ENCODE measurements at regions of chr3 and their contacts with region 1.

Region 1: GRCh38 chr3:194058189-194058571 is 77.8 kb upstream of the HES1 start:
- DNase-seq: peak; percentile 83 to 87
- H3K4me3 ChIP-seq: peak overlapping the region; percentile 28
- H3K4me3 Mint-ChIP-seq: peak overlapping the region; percentile 75
- H3K27ac Mint-ChIP-seq: peak overlapping the region; percentile 47
- H3K4me1 ChIP-seq: peaks cover 54% of the 10 kb centered on the region
- H3K4me1 Mint-ChIP-seq: peaks cover 36% of the 10 kb centered on the region
- H3K27me3 ChIP-seq: no peaks in the 10 kb centered on the region
- H3K27me3 Mint-ChIP-seq: no peaks in the 10 kb centered on the region
- CTCF ChIP-seq: no peak

Region 2: GRCh38 chr3:193851941-193852674 is 206.1 kb before region 1 on chr3:
- CTCF ChIA-PET with region 1: no interaction called
- POLR2A ChIA-PET with region 1: no interaction called
- intact Hi-C with region 1: loop called (anchors 2 kb)
- DNase-seq: no peak
- H3K4me3 ChIP-seq: no peak overlapping the region
- H3K4me3 Mint-ChIP-seq: peak overlapping the region; percentile 20
- H3K27ac Mint-ChIP-seq: peak overlapping the region; percentile 84
- H3K4me1 ChIP-seq: peaks cover 56% of the 10 kb centered on the region
- H3K4me1 Mint-ChIP-seq: peaks cover 40% of the 10 kb centered on the region
- H3K27me3 ChIP-seq: no peaks in the 10 kb centered on the region
- H3K27me3 Mint-ChIP-seq: no peaks in the 10 kb centered on the region
- CTCF ChIP-seq: no peak

Region 3: GRCh38 chr3:193971261-193971751 is 86.9 kb before region 1 on chr3:
- CTCF ChIA-PET with region 1: no interaction called
- POLR2A ChIA-PET with region 1: no interaction called
- intact Hi-C with region 1: loop called (anchors 2 kb)
- DNase-seq: no peak
- H3K4me3 ChIP-seq: no peak overlapping the region
- H3K4me3 Mint-ChIP-seq: no peak overlapping the region
- H3K27ac Mint-ChIP-seq: no peak overlapping the region
- H3K4me1 ChIP-seq: peaks cover 28% of the 10 kb centered on the region
- H3K4me1 Mint-ChIP-seq: peaks cover 33% of the 10 kb centered on the region
- H3K27me3 ChIP-seq: no peaks in the 10 kb centered on the region
- H3K27me3 Mint-ChIP-seq: no peaks in the 10 kb centered on the region
- CTCF ChIP-seq: no peak

Region 4: GRCh38 chr3:194009892-194010533 is 48.2 kb before region 1 on chr3:
- CTCF ChIA-PET with region 1: no interaction called
- POLR2A ChIA-PET with region 1: no interaction called
- intact Hi-C with region 1: no loop called
- DNase-seq: no peak
- H3K4me3 ChIP-seq: no peak overlapping the region
- H3K4me3 Mint-ChIP-seq: no peak overlapping the region
- H3K27ac Mint-ChIP-seq: peak overlapping the region; percentile 37
- H3K4me1 ChIP-seq: peaks cover 12% of the 10 kb centered on the region
- H3K4me1 Mint-ChIP-seq: peaks cover 21% of the 10 kb centered on the region
- H3K27me3 ChIP-seq: no peaks in the 10 kb centered on the region
- H3K27me3 Mint-ChIP-seq: no peaks in the 10 kb centered on the region
- CTCF ChIP-seq: no peak

Region 5: GRCh38 chr3:194032828-194033435 is 25.2 kb before region 1 on chr3:
- CTCF ChIA-PET with region 1: no interaction called
- POLR2A ChIA-PET with region 1: no interaction called
- intact Hi-C with region 1: no loop called
- DNase-seq: no peak
- H3K4me3 ChIP-seq: no peak overlapping the region
- H3K4me3 Mint-ChIP-seq: no peak overlapping the region
- H3K27ac Mint-ChIP-seq: no peak overlapping the region
- H3K4me1 ChIP-seq: peaks cover 26% of the 10 kb centered on the region
- H3K4me1 Mint-ChIP-seq: peaks cover 34% of the 10 kb centered on the region
- H3K27me3 ChIP-seq: no peaks in the 10 kb centered on the region
- H3K27me3 Mint-ChIP-seq: no peaks in the 10 kb centered on the region
- CTCF ChIP-seq: no peak

Region 6: DNA sequence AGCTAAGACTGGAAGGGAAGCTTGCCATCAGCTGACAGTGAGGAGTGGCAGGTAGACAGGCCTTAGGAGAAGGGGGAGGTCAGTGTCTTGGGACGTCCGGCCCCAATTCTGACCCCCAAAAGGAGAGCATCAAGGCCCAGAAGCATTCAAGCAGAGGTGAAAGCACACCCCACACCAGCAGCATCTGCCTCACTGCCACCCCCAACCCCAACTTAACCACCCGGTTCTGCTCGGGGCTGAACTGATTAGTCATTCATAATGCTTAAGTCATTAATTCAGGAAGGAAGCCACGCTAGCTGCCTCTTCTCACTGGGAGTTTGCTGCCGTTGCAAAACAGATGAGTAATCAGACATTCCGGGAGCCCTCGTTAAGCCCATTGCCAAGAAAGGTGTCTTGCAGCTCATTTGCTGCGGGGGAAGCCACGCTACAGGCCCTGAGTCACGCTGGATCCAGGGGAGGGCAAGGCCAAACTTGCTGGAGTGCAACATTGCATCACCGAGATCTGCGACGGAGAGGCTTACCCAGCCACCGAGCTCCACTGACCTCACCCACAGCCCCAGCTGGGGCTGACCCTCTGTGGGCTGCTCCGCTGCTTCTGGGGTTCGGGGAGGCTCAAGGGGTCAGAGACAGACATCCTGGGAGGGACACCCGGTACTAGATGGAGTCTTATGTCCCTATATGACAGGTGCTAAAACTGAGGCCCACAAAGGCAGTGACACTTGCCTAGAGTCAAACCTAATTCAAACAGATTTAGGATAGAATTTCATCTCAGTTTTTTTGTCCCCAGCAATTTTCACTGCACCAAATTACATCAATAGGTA is 31.4 kb after region 1 on chr3:
- CTCF ChIA-PET with region 1: no interaction called
- POLR2A ChIA-PET with region 1: no interaction called
- intact Hi-C with region 1: no loop called
- DNase-seq: peak; percentile 32 to 63
- H3K4me3 ChIP-seq: no peak overlapping the region
- H3K4me3 Mint-ChIP-seq: no peak overlapping the region
- H3K27ac Mint-ChIP-seq: no peak overlapping the region
- H3K4me1 ChIP-seq: peaks cover 31% of the 10 kb centered on the region
- H3K4me1 Mint-ChIP-seq: peaks cover 35% of the 10 kb centered on the region
- H3K27me3 ChIP-seq: no peaks in the 10 kb centered on the region
- H3K27me3 Mint-ChIP-seq: no peaks in the 10 kb centered on the region
- CTCF ChIP-seq: no peak

Region 7: DNA sequence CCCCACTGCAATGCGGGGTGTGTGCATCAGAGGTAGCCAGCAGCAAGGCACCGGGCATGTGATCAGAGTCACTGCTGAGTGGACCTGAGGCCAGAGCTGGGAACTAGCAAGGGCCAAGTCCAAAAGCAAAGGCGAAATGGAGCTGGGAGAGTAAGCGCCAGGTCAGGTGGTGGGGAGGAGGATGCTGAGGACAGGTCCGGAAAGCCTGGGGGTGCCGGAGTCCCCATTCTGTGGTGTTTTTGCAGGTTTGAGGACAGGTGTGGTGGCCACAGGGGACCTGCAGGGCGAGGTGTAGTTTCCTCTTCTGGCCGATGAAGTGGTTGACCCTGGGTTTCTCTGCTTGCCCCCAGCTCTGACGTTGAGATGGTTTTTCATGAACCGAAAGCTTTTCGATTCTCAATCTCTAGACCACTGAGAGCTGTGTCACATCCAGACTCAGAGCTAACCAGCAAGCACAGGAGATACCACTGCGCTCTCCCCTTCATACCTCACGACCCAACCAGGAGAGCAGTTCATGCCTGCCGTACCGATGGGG is 42.7 kb after region 1 on chr3:
- CTCF ChIA-PET with region 1: interaction called, 6 read pairs
- POLR2A ChIA-PET with region 1: no interaction called
- intact Hi-C with region 1: loop called (anchors 1 kb)
- DNase-seq: no peak
- H3K4me3 ChIP-seq: no peak overlapping the region
- H3K4me3 Mint-ChIP-seq: peak overlapping the region; percentile 43
- H3K27ac Mint-ChIP-seq: peak overlapping the region; percentile 46
- H3K4me1 ChIP-seq: peaks cover 70% of the 10 kb centered on the region
- H3K4me1 Mint-ChIP-seq: peaks cover 67% of the 10 kb centered on the region
- H3K27me3 ChIP-seq: no peaks in the 10 kb centered on the region
- H3K27me3 Mint-ChIP-seq: no peaks in the 10 kb centered on the region
- CTCF ChIP-seq: no peak

Region 8: DNA sequence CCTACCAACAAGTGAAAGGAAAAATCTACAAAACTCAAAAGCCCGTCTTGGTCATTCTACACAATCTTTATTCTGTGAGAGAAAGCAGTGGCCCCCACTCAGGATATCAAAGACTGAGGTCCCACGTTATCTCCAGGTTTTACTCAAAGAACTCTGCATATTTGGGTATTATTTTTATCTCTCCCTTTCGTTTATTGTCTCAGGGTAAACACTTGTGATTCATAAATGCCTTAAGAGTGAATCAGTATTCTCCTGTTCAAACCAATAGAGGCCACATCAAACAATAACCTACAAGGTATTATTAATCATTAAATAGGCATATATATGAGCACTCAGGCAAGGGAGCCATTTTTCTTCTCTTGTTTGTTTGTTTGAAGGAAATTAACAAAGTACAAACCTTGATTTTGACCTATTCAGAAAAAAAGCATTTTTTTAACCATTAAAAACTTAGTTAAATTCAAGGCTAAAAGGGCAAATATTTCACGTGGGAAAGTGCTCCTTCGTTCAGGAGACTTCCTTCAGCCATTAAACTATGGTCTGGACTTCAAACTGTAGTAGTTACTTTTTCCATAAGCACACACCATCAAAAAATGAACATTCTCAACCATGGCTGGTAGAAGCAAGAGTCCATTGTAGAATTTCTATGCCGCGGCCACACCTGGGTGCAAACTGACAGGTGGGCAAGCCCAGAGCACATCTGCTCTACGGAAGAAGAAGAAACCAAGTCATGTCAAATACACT is 63.9 kb after region 1 on chr3:
- CTCF ChIA-PET with region 1: interaction called, 3 read pairs
- POLR2A ChIA-PET with region 1: no interaction called
- intact Hi-C with region 1: loop called (anchors 2 kb)
- DNase-seq: peak; percentile 70 to 72
- H3K4me3 ChIP-seq: no peak overlapping the region
- H3K4me3 Mint-ChIP-seq: peak overlapping the region; percentile 56
- H3K27ac Mint-ChIP-seq: peak overlapping the region; percentile 89
- H3K4me1 ChIP-seq: peaks cover 82% of the 10 kb centered on the region
- H3K4me1 Mint-ChIP-seq: peaks cover 72% of the 10 kb centered on the region
- H3K27me3 ChIP-seq: no peaks in the 10 kb centered on the region
- H3K27me3 Mint-ChIP-seq: no peaks in the 10 kb centered on the region
- CTCF ChIP-seq: no peak

Measured in Caco-2 (cell line).